ENCODE measurements at regions of chr2 and their contacts with region 1.

Region 1: DNA sequence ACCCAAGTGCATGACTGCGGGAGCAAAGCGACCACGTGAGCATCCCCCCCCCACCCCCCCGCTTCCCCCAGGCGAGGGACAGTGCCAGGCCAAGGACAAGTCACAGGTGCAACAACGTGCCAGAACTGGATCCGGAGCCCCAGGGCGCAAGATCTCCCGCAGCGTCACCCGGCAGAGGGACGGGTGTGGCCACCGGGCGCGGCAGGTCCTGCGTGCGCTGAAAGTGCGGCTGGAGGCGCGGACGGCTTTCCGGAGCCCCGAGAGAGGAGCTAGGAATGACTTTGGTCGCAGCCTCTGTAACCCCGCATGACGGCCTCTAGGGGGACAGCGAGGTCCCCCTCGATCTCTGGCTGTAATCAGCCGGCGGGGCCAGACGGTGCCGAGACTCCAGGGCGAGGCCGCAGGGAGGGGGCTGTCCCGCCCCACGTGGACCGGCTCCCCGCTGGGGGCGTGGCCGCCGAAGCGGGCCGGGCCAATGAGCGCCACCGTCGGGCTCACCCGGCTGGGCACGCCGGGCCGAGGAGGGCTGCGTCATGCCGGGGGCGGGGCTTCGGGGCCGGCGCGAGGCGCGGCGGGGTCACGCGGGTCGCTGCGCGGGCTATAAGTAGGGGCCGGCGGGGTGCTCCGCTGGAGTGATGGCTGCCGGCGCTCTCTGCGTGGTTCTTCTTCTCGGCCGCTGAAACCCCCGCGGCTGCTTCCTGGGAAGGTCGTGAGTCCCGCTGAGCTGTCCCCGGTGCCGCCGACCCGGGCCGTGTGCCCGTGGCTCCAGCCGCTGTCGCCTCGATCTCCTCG is at the start of gene SLC20A1:
- DNase-seq: peak; percentile 100
- H3K4me3 Mint-ChIP-seq: peak within 1 kb of the TSS; percentile 100
- H3K27ac Mint-ChIP-seq: peak within 1 kb of the TSS; percentile 90
- H3K4me1 Mint-ChIP-seq: peaks cover 67% of the 10 kb centered on the region
- H3K27me3 Mint-ChIP-seq: no peaks in the 10 kb centered on the region
- total RNA-seq, gene SLC20A1: 180 and 182 TPM in 2 replicates

Region 2: DNA sequence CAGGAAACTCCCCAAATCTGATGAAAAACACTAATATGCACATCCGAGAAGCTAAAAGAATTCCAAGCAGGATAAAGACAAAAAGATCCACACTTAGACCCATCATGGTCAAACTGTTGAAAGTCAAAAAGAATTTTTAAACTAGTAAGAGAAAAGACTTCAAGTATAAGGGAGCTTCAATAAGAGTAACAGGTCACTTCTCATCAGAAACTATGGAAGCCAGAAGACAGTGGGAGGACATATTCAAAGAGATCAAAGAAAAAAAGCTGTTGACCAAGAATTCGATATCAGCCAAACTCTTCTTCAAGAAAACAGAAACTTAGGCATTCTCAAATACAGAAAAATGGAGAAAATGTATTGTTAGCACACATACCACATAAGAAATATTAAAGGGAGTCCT is 441.1 kb before region 1 on chr2:
- intact Hi-C with region 1: no loop called
- DNase-seq: peak; percentile 3
- H3K4me3 Mint-ChIP-seq: no peak overlapping the region
- H3K27ac Mint-ChIP-seq: no peak overlapping the region
- H3K4me1 Mint-ChIP-seq: peaks cover 6% of the 10 kb centered on the region
- H3K27me3 Mint-ChIP-seq: no peaks in the 10 kb centered on the region

Region 3: GRCh38 chr2:112566104-112566503 is 79.4 kb before region 1 on chr2:
- intact Hi-C with region 1: no loop called
- DNase-seq: no peak
- H3K4me3 Mint-ChIP-seq: no peak overlapping the region
- H3K27ac Mint-ChIP-seq: no peak overlapping the region
- H3K4me1 Mint-ChIP-seq: peaks cover 9% of the 10 kb centered on the region
- H3K27me3 Mint-ChIP-seq: no peaks in the 10 kb centered on the region

Region 4: GRCh38 chr2:112584134-112584890 is 61.2 kb before region 1 on chr2 and contains the start of gene CHCHD5:
- intact Hi-C with region 1: loop called (anchors 1 kb)
- DNase-seq: peak; percentile 98
- H3K4me3 Mint-ChIP-seq: peak within 1 kb of the TSS; percentile 93
- H3K27ac Mint-ChIP-seq: peak within 1 kb of the TSS; percentile 99
- H3K4me1 Mint-ChIP-seq: peaks cover 33% of the 10 kb centered on the region
- H3K27me3 Mint-ChIP-seq: no peaks in the 10 kb centered on the region
- total RNA-seq, gene CHCHD5: 36.4 and 37.6 TPM in 2 replicates

Region 5: DNA sequence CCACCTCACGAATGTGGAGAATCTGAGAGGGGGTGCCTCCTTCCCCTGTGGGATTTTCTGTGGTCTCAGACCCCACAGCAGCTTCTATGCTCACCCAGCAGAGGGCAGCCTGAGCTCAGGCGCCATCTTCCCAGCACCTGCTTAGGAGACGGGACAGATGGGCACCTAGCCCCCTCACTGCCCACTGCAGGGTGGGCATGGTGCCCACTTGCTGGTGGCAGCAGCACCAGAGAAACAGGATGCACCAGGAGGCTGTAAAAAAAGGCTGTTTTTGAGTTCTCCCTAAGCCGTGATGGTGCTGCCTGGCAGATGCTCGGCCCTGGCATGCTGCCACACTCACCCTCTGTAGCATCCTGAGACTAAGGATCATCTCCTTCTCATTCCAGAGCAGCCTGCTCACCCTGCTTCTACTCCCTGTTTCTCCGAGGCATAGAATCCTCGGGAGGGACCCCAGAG is 18.9 kb before region 1 on chr2:
- intact Hi-C with region 1: loop called (anchors 1 kb)
- DNase-seq: peak; percentile 89
- H3K4me3 Mint-ChIP-seq: peak overlapping the region; percentile 56
- H3K27ac Mint-ChIP-seq: peak overlapping the region; percentile 90
- H3K4me1 Mint-ChIP-seq: peaks cover 74% of the 10 kb centered on the region
- H3K27me3 Mint-ChIP-seq: no peaks in the 10 kb centered on the region

Region 6: GRCh38 chr2:112692496-112692911 is 47.0 kb after region 1 on chr2:
- intact Hi-C with region 1: loop called (anchors 2 kb)
- DNase-seq: peak; percentile 90
- H3K4me3 Mint-ChIP-seq: peak overlapping the region; percentile 50
- H3K27ac Mint-ChIP-seq: peak overlapping the region; percentile 80
- H3K4me1 Mint-ChIP-seq: peaks cover 33% of the 10 kb centered on the region
- H3K27me3 Mint-ChIP-seq: no peaks in the 10 kb centered on the region

Region 7: GRCh38 chr2:112726497-112727190 is 81.1 kb after region 1 on chr2:
- intact Hi-C with region 1: loop called (anchors 5 kb)
- DNase-seq: peak; percentile 97
- H3K4me3 Mint-ChIP-seq: no peak overlapping the region
- H3K27ac Mint-ChIP-seq: peak overlapping the region; percentile 32
- H3K4me1 Mint-ChIP-seq: peaks cover 25% of the 10 kb centered on the region
- H3K27me3 Mint-ChIP-seq: peaks cover 2% of the 10 kb centered on the region

Region 8: GRCh38 chr2:112836695-112837117 is 191.2 kb after region 1 on chr2 and contains the start of gene IL1B:
- intact Hi-C with region 1: no loop called
- DNase-seq: no peak
- H3K4me3 Mint-ChIP-seq: no peak within 1 kb of the TSS
- H3K27ac Mint-ChIP-seq: no peak within 1 kb of the TSS
- H3K4me1 Mint-ChIP-seq: peaks cover 4% of the 10 kb centered on the region
- H3K27me3 Mint-ChIP-seq: peaks cover 41% of the 10 kb centered on the region
- total RNA-seq, gene IL1B: 0.33 and 0.92 TPM in 2 replicates

Region 9: GRCh38 chr2:112924821-112925220 is 279.3 kb after region 1 on chr2:
- intact Hi-C with region 1: no loop called
- DNase-seq: no peak
- H3K4me3 Mint-ChIP-seq: no peak overlapping the region
- H3K27ac Mint-ChIP-seq: no peak overlapping the region
- H3K4me1 Mint-ChIP-seq: peaks cover 5% of the 10 kb centered on the region
- H3K27me3 Mint-ChIP-seq: peaks cover 4% of the 10 kb centered on the region

Measured in activated CD4-positive, alpha-beta T cell treated with anti-CD3 and anti-CD28 coated beads, Interleukin-2, amount 10 ng/mL, durations not matched to agents 24 days and 14 days (primary cell).